ENCODE measurements at regions of chr2 and their contacts with region 1.

Region 1: GRCh38 chr2:25131567-25132298 is 36.6 kb downstream of the POMC start:
- DNase-seq: peak; percentile 30 to 76
- H3K4me3 ChIP-seq: peak overlapping the region; percentile 32 to 43 (median 36)
- H3K27ac ChIP-seq: no peak overlapping the region
- H3K4me1 ChIP-seq: peaks cover 6 to 22% (median 18%) of the 10 kb centered on the region in 4 donors
- H3K27me3 ChIP-seq: peaks cover 0 to 63% (median 20%) of the 10 kb centered on the region in 3 donors
- CTCF ChIP-seq: no peak
- EP300 ChIP-seq: no peak
- POLR2A ChIP-seq: no peak

Region 2: GRCh38 chr2:24771764-24772586 is 359.8 kb before region 1 on chr2:
- intact Hi-C with region 1: no loop called
- DNase-seq: no peak
- H3K4me3 ChIP-seq: no peak overlapping the region
- H3K27ac ChIP-seq: no peak overlapping the region
- H3K4me1 ChIP-seq: no peaks in the 10 kb centered on the region
- H3K27me3 ChIP-seq: no peaks in the 10 kb centered on the region
- CTCF ChIP-seq: no peak
- EP300 ChIP-seq: no peak
- POLR2A ChIP-seq: no peak

Region 3: DNA sequence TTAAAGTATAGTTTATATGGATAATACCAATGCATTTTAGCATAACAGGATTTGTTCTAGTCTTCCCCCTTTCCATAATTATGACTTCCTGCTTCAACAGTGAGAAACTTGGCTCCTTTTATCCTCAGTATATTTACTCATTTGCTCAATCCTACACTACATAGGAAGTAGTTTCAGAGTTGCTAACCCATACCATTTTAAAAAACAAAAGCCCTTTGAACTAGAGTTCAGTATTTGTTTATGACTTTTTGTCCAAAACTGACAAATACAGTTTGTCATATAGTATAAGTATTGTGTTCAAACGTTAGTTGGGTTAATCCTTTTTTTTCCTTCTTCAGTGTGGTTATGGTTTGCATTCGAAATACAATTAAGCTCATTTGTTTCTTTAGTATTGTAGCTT is 154.1 kb before region 1 on chr2:
- intact Hi-C with region 1: loop called (anchors 5 kb)
- DNase-seq: no peak
- H3K4me3 ChIP-seq: no peak overlapping the region
- H3K27ac ChIP-seq: no peak overlapping the region
- H3K4me1 ChIP-seq: peaks cover 0 to 21% (median 12%) of the 10 kb centered on the region in 4 donors
- H3K27me3 ChIP-seq: no peaks in the 10 kb centered on the region
- CTCF ChIP-seq: no peak
- EP300 ChIP-seq: no peak
- POLR2A ChIP-seq: no peak